GM10248 (cell line): ENCODE measurements at regions of chr2 and their contacts with region 1.

Region 1: GRCh38 chr2:37877457-37878315 is 47.4 kb upstream of the RMDN2 start:
- DNase-seq: peak; percentile 50
- CTCF ChIP-seq: peak; percentile 60

Region 2: GRCh38 chr2:37367984-37368383 is 509.7 kb before region 1 on chr2:
- CTCF ChIA-PET with region 1: interaction called, 12 read pairs
- POLR2A ChIA-PET with region 1: no interaction called
- DNase-seq: no peak
- CTCF ChIP-seq: no peak

Region 3: GRCh38 chr2:37389989-37390765 is 487.5 kb before region 1 on chr2:
- CTCF ChIA-PET with region 1: interaction called, 188 read pairs
- POLR2A ChIA-PET with region 1: no interaction called
- DNase-seq: peak; percentile 83
- CTCF ChIP-seq: no peak

Region 4: DNA sequence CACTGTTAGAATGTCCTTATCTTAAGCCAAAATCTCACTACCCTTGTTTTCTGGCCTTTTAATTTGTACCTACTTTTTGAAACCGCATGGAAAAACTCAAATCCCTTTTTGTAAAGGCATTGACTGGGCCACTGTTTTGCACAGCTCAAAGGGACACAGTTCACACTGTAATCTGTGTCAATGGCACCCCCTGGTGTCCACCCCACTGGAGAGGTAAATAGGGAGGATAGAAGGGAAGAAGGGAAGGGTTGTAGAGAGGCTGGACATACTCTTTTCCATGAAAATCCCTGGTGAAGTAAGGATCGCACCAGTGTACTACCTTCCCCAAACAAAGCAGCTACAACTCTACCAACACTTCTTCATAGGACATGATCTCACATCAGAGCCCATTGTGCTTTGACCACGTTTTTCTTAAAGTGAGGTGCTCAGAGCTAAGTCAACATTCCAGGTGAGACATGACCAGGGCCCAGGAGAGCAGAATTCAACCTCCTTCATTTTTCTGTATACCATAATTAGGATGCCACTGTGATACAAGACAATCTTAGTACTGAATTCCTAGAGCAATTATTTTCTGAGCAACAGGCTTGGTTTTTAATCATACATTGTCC is 45.0 kb before region 1 on chr2:
- CTCF ChIA-PET with region 1: interaction called, 86 read pairs
- POLR2A ChIA-PET with region 1: no interaction called
- DNase-seq: peak; percentile 69
- CTCF ChIP-seq: peak; percentile 91

Region 5: GRCh38 chr2:37890893-37891495 is 13.3 kb after region 1 on chr2:
- CTCF ChIA-PET with region 1: interaction called, 91 read pairs
- POLR2A ChIA-PET with region 1: no interaction called
- DNase-seq: peak; percentile 68
- CTCF ChIP-seq: peak; percentile 76

Region 6: DNA sequence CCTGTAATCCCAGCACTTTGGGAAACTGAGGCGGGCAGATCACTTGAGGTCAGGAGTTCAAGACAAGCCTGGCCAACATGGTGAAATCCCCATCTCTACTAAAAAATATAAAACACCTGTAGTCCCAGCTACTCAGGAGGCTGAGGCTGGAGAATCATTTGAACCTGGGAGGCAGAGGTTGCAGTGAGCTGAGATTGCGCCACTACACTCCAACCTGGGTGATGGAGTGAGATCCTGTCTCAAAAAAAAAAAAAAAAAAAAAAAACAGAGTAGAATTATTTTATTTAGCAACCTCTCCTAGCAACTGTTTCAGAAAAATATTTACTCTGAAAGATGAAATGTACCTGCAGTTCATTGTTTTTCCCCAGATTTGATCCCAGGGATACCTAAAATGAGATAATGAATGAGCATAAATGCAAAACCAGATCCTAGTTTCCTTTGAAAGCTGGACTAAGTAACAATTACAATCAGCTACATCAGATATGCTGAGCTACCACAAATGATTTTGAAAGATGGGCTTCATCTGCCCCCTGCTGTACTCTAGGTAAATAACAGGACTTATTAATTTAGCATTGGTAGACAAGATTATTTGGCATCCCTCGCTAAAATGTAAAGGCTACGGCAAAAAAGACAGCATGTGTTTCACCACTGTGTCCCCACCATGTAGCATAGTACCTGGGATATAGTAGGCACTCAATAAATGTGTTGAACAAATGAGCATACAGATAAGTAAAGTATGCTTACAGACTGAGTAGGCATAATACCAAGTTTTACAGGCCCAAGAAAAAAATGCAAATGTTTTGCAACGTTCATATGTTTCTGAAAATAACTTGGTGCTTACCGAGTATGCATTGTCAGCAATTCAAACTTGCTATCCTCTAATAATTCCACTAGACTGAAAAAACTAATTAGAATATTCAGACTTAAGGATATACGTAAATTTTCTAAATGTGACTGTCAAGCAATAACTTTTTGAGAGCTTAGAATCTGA is 396.9 kb after region 1 on chr2:
- CTCF ChIA-PET with region 1: interaction called, 14 read pairs
- POLR2A ChIA-PET with region 1: no interaction called
- DNase-seq: peak; percentile 65
- CTCF ChIP-seq: peak; percentile 65